CD8-positive, alpha-beta memory T cell (primary cell): ENCODE measurements at regions of chr10 and their contacts with region 1.

Region 1: GRCh38 chr10:14409856-14410458 is 79.2 kb upstream of the FRMD4A start:
- DNase-seq: peak in 1 of 5 donors; percentile 26
- H3K4me3 ChIP-seq: no peak overlapping the region
- H3K4me3 Mint-ChIP-seq: peak overlapping the region in 5 of 7 donors; percentile 22 to 49 (median 41)
- H3K27ac ChIP-seq: no peak overlapping the region
- H3K27ac Mint-ChIP-seq: peak overlapping the region in 4 of 8 donors; percentile 0 to 90 (median 46)
- H3K4me1 ChIP-seq: peaks cover 14% of the 10 kb centered on the region
- H3K4me1 Mint-ChIP-seq: peaks cover 18 to 27% (median 22%) of the 10 kb centered on the region in 3 donors
- H3K27me3 ChIP-seq: no peaks in the 10 kb centered on the region
- H3K27me3 Mint-ChIP-seq: peaks cover 27 to 42% of the 10 kb centered on the region in 2 donors

Region 2: DNA sequence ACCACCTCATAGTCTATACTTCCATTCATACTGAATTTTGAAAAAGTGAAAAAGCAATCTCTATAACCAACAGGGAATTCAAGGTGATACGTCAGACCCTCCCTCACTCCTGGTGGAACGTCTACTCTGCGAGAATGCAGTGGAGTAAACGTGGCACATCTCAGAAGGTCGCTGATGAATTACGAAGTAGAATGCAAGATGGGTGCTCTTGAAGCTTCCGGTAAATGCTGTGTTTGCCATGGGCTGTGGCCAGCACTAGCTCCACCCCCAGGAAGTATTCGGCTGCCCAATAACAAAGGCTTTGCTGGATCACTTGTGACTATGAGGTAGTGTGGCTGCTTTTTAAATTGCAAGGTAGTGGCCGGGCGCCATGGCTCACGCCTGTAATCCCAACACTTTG is 597.2 kb before region 1 on chr10:
- CTCF ChIA-PET with region 1: no interaction called
- POLR2A ChIA-PET with region 1: interaction called, 13 read pairs
- DNase-seq: no peak
- H3K4me3 ChIP-seq: no peak overlapping the region
- H3K4me3 Mint-ChIP-seq: no peak overlapping the region
- H3K27ac ChIP-seq: no peak overlapping the region
- H3K27ac Mint-ChIP-seq: no peak overlapping the region
- H3K4me1 ChIP-seq: no peaks in the 10 kb centered on the region
- H3K4me1 Mint-ChIP-seq: peaks cover 0 to 6% (median 0%) of the 10 kb centered on the region in 3 donors
- H3K27me3 ChIP-seq: no peaks in the 10 kb centered on the region
- H3K27me3 Mint-ChIP-seq: peaks cover 0 to 3% of the 10 kb centered on the region in 2 donors